Natural killer cell (primary cell): ENCODE measurements at regions of chr4 and their contacts with region 1.

Region 1: DNA sequence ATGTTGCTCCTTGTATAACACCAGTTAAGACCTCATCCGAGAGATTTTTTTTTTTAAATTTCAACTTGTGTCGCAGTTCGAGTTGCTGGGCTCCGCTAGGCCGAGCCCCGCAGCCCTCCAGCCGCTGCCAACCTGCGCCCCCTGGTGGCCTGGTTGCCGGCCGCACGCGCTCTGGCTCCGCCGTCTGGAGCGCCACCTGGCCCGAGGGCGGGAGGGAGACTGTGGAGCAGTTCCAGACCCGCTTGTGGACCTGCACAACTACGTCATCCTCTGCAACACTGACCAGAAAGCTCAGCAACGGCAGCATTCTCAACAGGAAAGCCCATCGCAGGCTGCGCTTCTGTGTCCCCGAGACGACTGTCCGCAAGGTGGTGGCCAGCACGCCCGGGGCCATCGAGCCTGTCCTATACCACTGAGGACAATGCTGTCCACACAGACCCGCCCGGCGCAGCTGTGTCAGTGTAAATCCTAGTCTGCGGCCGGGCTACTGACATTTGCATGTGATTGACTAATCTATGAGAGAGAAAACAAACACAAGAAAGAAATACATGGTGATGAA is 39.1 kb downstream of the ARL9 start:
- DNase-seq: peak; percentile 83 to 90
- ATAC-seq: peak; percentile 96 to 100 (median 100)
- H3K4me3 ChIP-seq: peak overlapping the region; percentile 16
- H3K4me3 Mint-ChIP-seq: peak overlapping the region; percentile 72
- H3K27ac ChIP-seq: no peak overlapping the region
- H3K27ac Mint-ChIP-seq: peak overlapping the region in 1 of 2 donors; percentile 14
- H3K4me1 ChIP-seq: peaks cover 4% of the 10 kb centered on the region
- H3K4me1 Mint-ChIP-seq: peaks cover 7 to 11% of the 10 kb centered on the region in 2 donors
- H3K27me3 ChIP-seq: no peaks in the 10 kb centered on the region
- H3K27me3 Mint-ChIP-seq: peaks cover 15% of the 10 kb centered on the region in 2 donors
- CTCF ChIP-seq: peak; percentile 99

Region 2: GRCh38 chr4:56387023-56388001 is 157.3 kb before region 1 on chr4 and contains the start of gene AASDH:
- intact Hi-C with region 1: no loop called
- DNase-seq: peak; percentile 97 to 98
- ATAC-seq: peak; percentile 84 to 92 (median 86)
- H3K4me3 ChIP-seq: peak within 1 kb of the TSS; percentile 73
- H3K4me3 Mint-ChIP-seq: peak within 1 kb of the TSS; percentile 98
- H3K27ac ChIP-seq: peak within 1 kb of the TSS; percentile 94
- H3K27ac Mint-ChIP-seq: peak within 1 kb of the TSS; percentile 98 to 99
- H3K4me1 ChIP-seq: peaks cover 11% of the 10 kb centered on the region
- H3K4me1 Mint-ChIP-seq: peaks cover 24 to 31% of the 10 kb centered on the region in 2 donors
- H3K27me3 ChIP-seq: no peaks in the 10 kb centered on the region
- H3K27me3 Mint-ChIP-seq: no peaks in the 10 kb centered on the region
- CTCF ChIP-seq: no peak
- total RNA-seq, gene AASDH: 9.5 to 14.2 (median 9.6) TPM

Region 3: GRCh38 chr4:56410235-56411062 is 134.2 kb before region 1 on chr4:
- intact Hi-C with region 1: no loop called
- DNase-seq: no peak
- ATAC-seq: no peak
- H3K4me3 ChIP-seq: no peak overlapping the region
- H3K4me3 Mint-ChIP-seq: no peak overlapping the region
- H3K27ac ChIP-seq: no peak overlapping the region
- H3K27ac Mint-ChIP-seq: no peak overlapping the region
- H3K4me1 ChIP-seq: no peaks in the 10 kb centered on the region
- H3K4me1 Mint-ChIP-seq: no peaks in the 10 kb centered on the region
- H3K27me3 ChIP-seq: no peaks in the 10 kb centered on the region
- H3K27me3 Mint-ChIP-seq: no peaks in the 10 kb centered on the region
- CTCF ChIP-seq: no peak

Region 4: DNA sequence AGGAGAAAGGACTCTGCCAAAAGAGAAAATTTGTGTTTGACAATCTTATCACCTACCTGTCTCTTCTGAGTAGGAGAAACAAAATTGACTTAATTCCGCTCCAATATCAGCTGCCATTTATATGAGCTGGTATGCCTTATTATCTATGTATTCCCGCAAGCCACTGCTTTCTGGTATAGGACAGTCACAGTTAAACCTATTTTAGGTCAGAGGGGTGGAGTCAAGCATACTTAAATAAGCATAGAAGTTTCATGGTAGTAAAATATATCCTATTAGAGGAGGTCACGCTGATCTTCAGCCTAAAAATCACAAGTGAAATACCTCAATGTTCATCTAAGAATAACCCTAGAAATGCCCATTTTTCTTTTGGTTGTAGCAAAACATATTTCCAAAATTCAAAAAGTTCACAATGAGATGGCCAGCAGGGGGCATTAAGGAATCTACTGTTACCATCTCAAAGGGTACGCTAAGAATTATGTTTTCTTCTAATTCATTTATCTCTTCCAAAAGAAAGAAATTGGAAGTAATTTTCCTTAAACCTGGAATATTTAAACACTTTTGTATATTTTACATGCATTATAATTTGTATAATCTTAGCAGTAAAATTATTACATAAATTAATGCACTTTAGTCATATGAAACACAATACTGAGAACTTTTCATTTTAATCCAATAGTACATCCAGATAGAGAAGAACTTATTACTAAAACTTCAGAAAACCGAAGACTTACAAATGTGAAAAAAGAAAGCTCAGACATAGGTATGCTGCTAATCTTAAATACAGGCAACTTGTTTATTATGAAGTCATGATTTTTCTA is 119.7 kb before region 1 on chr4:
- intact Hi-C with region 1: loop called (anchors 1 kb)
- DNase-seq: peak in 1 of 2 donors; percentile 77
- ATAC-seq: peak in 2 of 3 donors; percentile 45 to 58
- H3K4me3 ChIP-seq: no peak overlapping the region
- H3K4me3 Mint-ChIP-seq: no peak overlapping the region
- H3K27ac ChIP-seq: no peak overlapping the region
- H3K27ac Mint-ChIP-seq: no peak overlapping the region
- H3K4me1 ChIP-seq: no peaks in the 10 kb centered on the region
- H3K4me1 Mint-ChIP-seq: no peaks in the 10 kb centered on the region
- H3K27me3 ChIP-seq: no peaks in the 10 kb centered on the region
- H3K27me3 Mint-ChIP-seq: no peaks in the 10 kb centered on the region
- CTCF ChIP-seq: peak; percentile 77

Region 5: DNA sequence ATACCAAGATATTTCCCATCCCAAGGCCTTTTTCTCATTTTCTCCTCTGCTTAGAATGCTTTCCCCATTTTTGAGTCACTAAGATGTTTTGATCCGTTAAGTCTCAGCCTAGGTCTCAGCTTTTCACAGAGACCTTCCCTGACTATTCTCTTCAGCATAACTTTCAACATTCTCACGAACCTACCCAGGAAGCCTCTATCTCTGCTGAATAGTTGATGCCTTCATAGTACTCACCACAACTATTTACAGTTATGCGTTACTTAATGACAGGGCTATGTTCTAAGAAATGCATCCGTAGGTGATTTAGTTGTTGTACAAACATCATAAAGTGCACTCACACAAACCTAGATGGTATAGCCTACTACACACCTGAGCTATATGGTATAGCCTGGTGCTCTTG is 25.4 kb after region 1 on chr4:
- intact Hi-C with region 1: no loop called
- DNase-seq: no peak
- ATAC-seq: no peak
- H3K4me3 ChIP-seq: no peak overlapping the region
- H3K4me3 Mint-ChIP-seq: no peak overlapping the region
- H3K27ac ChIP-seq: no peak overlapping the region
- H3K27ac Mint-ChIP-seq: no peak overlapping the region
- H3K4me1 ChIP-seq: no peaks in the 10 kb centered on the region
- H3K4me1 Mint-ChIP-seq: peaks cover 0 to 5% of the 10 kb centered on the region in 2 donors
- H3K27me3 ChIP-seq: no peaks in the 10 kb centered on the region
- H3K27me3 Mint-ChIP-seq: no peaks in the 10 kb centered on the region
- CTCF ChIP-seq: no peak